ENCODE measurements at regions of chr2 and their contacts with region 1.

Region 1: GRCh38 chr2:9656270-9656766 is 25.5 kb upstream of the YWHAQ start:
- DNase-seq: peak; percentile 74
- H3K4me3 Mint-ChIP-seq: peak overlapping the region; percentile 4
- H3K27ac Mint-ChIP-seq: peak overlapping the region; percentile 91
- H3K4me1 Mint-ChIP-seq: peaks cover 49% of the 10 kb centered on the region
- H3K27me3 Mint-ChIP-seq: no peaks in the 10 kb centered on the region

Region 2: DNA sequence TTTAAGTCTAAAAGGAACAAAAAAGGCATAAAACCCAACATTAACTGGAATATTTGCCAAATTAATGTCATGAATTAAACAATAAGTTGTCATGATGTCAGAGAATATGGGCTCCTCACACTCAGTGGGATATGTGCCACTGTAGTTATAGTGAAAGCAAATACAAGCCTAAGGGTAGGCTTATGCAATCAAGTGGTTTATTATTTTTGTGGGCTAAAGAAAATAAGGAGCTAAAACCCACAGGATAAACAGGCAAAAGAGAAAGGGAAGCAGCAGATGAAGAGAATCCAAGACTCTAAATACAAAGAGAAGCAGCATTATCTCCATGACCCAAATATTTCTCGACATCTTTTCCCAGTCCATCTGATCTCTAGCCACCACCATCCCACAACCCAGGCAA is 43.0 kb before region 1 on chr2:
- intact Hi-C with region 1: loop called (anchors 1 kb)
- DNase-seq: no peak
- H3K4me3 Mint-ChIP-seq: no peak overlapping the region
- H3K27ac Mint-ChIP-seq: no peak overlapping the region
- H3K4me1 Mint-ChIP-seq: peaks cover 78% of the 10 kb centered on the region
- H3K27me3 Mint-ChIP-seq: no peaks in the 10 kb centered on the region

Region 3: DNA sequence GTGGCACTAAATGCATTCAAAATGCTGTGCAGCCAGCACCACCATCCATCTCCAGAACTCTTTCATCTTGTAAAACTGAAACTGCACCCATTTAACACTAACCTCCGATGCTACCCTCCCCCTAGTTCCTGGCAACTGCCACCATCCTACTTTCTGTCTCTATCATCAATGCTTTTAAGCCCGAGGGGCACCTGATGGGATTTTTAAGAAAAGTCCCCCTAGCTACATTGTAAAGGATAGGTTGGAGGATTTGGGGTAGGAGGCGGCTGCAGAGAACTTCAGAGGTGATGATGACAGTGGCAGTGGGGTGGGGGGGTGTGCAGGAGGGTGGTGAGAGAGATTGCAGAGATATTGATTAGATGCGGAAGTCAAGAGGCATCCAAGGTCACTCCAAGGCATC is 14.7 kb before region 1 on chr2:
- intact Hi-C with region 1: loop called (anchors 1 kb)
- DNase-seq: no peak
- H3K4me3 Mint-ChIP-seq: peak overlapping the region; percentile 35
- H3K27ac Mint-ChIP-seq: peak overlapping the region; percentile 74
- H3K4me1 Mint-ChIP-seq: peaks cover 35% of the 10 kb centered on the region
- H3K27me3 Mint-ChIP-seq: no peaks in the 10 kb centered on the region

Region 4: GRCh38 chr2:9703085-9703641 is 46.8 kb after region 1 on chr2:
- intact Hi-C with region 1: loop called (anchors 1 kb)
- DNase-seq: peak; percentile 78
- H3K4me3 Mint-ChIP-seq: no peak overlapping the region
- H3K27ac Mint-ChIP-seq: peak overlapping the region; percentile 83
- H3K4me1 Mint-ChIP-seq: peaks cover 60% of the 10 kb centered on the region
- H3K27me3 Mint-ChIP-seq: no peaks in the 10 kb centered on the region

Region 5: DNA sequence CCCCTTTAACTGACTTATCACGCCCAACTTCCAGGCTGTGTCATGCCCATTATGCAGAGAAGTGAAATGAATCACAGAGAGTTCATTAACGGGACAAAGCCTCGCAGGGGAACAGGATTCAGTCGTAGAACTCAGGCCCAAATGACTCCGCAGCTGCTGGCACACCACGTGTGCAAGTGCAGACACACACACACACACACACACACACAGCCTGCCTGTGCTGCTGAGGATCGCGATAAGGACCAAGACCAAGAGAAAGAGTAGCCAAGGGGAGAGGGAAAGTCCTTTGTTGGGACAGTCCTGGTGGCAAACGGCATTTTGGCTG is 96.9 kb after region 1 on chr2:
- intact Hi-C with region 1: loop called (anchors 1 kb)
- DNase-seq: peak; percentile 56
- H3K4me3 Mint-ChIP-seq: peak overlapping the region; percentile 77
- H3K27ac Mint-ChIP-seq: peak overlapping the region; percentile 92
- H3K4me1 Mint-ChIP-seq: peaks cover 53% of the 10 kb centered on the region
- H3K27me3 Mint-ChIP-seq: peaks cover 21% of the 10 kb centered on the region